Lower leg skin (tissue), 4 donors: ENCODE measurements at regions of chr3 and their contacts with region 1.

Region 1: GRCh38 chr3:138915503-138916498 is 31.1 kb downstream of the FOXL2 start:
- DNase-seq: peak; percentile 91 to 98
- H3K4me3 ChIP-seq: peak overlapping the region; percentile 46
- CTCF ChIP-seq: peak in 1 of 3 donors; percentile 72
- POLR2A ChIP-seq: no peak

Region 2: DNA sequence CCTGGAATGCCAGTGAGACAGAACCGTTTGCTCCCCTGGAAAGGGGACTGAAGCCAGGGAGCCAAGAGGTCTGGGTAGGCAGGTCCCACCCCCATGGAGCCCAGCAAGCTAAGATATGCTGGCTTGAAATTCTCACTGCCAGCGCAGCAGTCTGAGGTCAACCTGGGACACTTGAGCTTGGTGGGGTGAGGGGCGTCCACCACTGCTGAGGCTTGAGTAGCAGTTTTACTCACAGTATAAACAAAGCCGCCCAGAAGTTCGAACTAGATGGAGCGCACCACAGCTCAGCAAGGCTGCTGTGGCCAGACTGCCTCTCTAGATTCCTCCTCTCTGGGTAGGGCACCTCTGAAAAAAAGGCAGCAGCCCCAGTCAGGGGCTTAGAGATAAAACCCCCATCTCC is 355.3 kb before region 1 on chr3:
- intact Hi-C with region 1: no loop called
- DNase-seq: no peak
- H3K4me3 ChIP-seq: no peak overlapping the region
- CTCF ChIP-seq: no peak
- POLR2A ChIP-seq: no peak

Region 3: GRCh38 chr3:138694287-138695007 is 221.4 kb before region 1 on chr3:
- intact Hi-C with region 1: loop called (anchors 5 kb)
- DNase-seq: no peak
- H3K4me3 ChIP-seq: no peak overlapping the region
- CTCF ChIP-seq: no peak
- POLR2A ChIP-seq: no peak

Region 4: GRCh38 chr3:139120086-139121056 is 204.6 kb after region 1 on chr3:
- intact Hi-C with region 1: no loop called
- DNase-seq: peak in 1 of 2 donors; percentile 45
- H3K4me3 ChIP-seq: no peak overlapping the region
- CTCF ChIP-seq: no peak
- POLR2A ChIP-seq: no peak

Region 5: DNA sequence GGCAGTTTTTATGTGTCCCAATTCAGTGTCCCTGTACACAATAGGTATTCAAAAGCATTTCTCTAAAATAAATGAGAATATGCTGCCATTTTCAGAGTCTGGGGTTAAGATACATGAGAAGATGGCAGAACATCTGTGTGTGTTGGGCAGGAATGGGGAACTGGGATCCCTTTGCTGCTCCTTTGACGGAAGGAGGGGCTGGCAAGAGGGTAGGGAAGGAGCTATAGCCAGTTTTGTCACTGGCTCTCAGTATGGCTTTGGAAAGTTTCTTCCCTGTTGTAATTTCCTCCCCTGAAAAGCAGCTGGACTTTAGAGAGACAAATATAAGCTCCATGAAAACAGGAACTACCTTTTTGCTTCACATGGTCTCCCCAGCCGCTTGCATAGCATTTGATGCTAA is 266.3 kb after region 1 on chr3:
- intact Hi-C with region 1: no loop called
- DNase-seq: no peak
- H3K4me3 ChIP-seq: no peak overlapping the region
- CTCF ChIP-seq: no peak
- POLR2A ChIP-seq: no peak